CD4-positive, alpha-beta T cell (primary cell): ENCODE measurements at regions of chr6 and their contacts with region 1.

Region 1: GRCh38 chr6:90393232-90393884 is 96.7 kb upstream of the BACH2 start:
- DNase-seq: peak; percentile 54 to 86 (median 61)
- ATAC-seq: peak; percentile 73
- H3K4me3 ChIP-seq: no peak overlapping the region
- H3K4me3 Mint-ChIP-seq: no peak overlapping the region
- H3K27ac ChIP-seq: no peak overlapping the region
- H3K27ac Mint-ChIP-seq: peak overlapping the region; percentile 6
- H3K4me1 ChIP-seq: peaks cover 22% of the 10 kb centered on the region
- H3K4me1 Mint-ChIP-seq: peaks cover 34% of the 10 kb centered on the region
- H3K27me3 ChIP-seq: no peaks in the 10 kb centered on the region
- H3K27me3 Mint-ChIP-seq: no peaks in the 10 kb centered on the region
- CTCF ChIP-seq: peak; percentile 81

Region 2: GRCh38 chr6:89819336-89820130 is 573.8 kb before region 1 on chr6 and contains the start of gene MDN1:
- CTCF ChIA-PET with region 1: no interaction called
- POLR2A ChIA-PET with region 1: no interaction called
- intact Hi-C with region 1: loop called in 1 of 2 experiments (anchors 10 kb)
- DNase-seq: peak; percentile 67 to 96 (median 82)
- ATAC-seq: peak; percentile 91
- H3K4me3 ChIP-seq: peak within 1 kb of the TSS; percentile 91
- H3K4me3 Mint-ChIP-seq: peak within 1 kb of the TSS; percentile 93
- H3K27ac ChIP-seq: peak within 1 kb of the TSS; percentile 79 to 83
- H3K27ac Mint-ChIP-seq: peak within 1 kb of the TSS; percentile 86
- H3K4me1 ChIP-seq: peaks cover 24% of the 10 kb centered on the region
- H3K4me1 Mint-ChIP-seq: peaks cover 36% of the 10 kb centered on the region
- H3K27me3 ChIP-seq: no peaks in the 10 kb centered on the region
- H3K27me3 Mint-ChIP-seq: no peaks in the 10 kb centered on the region
- CTCF ChIP-seq: no peak
- total RNA-seq, gene MDN1: 40.3 to 40.4 TPM

Region 3: DNA sequence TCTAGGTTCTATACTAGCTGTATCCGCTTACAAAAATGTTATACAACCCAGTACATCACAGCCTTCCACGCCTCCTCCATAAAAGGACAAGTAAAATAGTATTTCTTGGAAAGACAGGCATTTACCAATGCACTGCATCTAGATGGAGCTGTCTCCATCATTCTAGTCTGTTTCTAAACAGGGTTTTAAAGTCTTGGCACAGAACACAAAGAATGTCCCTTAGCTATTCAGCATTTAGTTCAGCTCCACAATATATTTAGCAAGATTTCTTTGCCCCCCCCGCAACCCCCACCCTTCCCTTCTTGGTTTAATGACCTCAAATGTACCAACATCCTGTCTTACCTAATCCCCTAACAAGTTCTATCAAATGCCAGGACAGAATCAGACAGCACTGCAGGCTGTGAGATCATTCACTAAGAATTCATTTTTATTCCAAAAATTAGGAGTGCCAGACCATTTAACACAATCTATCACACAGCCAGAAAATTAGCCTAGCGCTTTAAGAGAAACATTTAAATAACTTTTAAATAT is 295.3 kb before region 1 on chr6:
- CTCF ChIA-PET with region 1: interaction called, 3 read pairs
- POLR2A ChIA-PET with region 1: no interaction called
- intact Hi-C with region 1: loop called in 1 of 2 experiments (anchors 10 kb)
- DNase-seq: peak in 5 of 14 experiments; percentile 17 to 51 (median 43)
- ATAC-seq: peak; percentile 77
- H3K4me3 ChIP-seq: no peak overlapping the region
- H3K4me3 Mint-ChIP-seq: peak overlapping the region; percentile 7
- H3K27ac ChIP-seq: no peak overlapping the region
- H3K27ac Mint-ChIP-seq: peak overlapping the region; percentile 82
- H3K4me1 ChIP-seq: peaks cover 34% of the 10 kb centered on the region
- H3K4me1 Mint-ChIP-seq: peaks cover 94% of the 10 kb centered on the region
- H3K27me3 ChIP-seq: no peaks in the 10 kb centered on the region
- H3K27me3 Mint-ChIP-seq: no peaks in the 10 kb centered on the region
- CTCF ChIP-seq: peak; percentile 3

Region 4: DNA sequence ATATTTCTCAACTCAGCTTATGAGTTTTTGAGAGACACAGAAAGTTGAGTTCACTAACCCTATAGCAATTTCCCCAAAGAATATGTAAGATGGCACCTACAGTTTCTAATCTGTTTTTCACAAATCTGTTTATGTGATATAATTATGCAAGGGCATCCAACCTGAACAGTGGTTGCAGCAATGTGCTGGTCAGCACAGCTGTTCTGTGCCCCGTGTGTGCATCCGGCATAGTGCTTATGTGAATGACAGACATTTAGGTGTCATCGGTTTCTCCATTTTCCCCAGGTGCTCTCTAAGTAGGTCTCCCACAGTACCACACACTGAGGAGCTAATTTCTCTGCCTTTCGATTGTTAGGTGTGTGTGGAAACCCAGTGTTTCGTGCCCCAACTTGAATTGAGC is 89.0 kb before region 1 on chr6:
- CTCF ChIA-PET with region 1: interaction called, 9 read pairs
- POLR2A ChIA-PET with region 1: no interaction called
- intact Hi-C with region 1: loop called in 1 of 2 experiments (anchors 5 kb)
- DNase-seq: no peak
- ATAC-seq: no peak
- H3K4me3 ChIP-seq: no peak overlapping the region
- H3K4me3 Mint-ChIP-seq: no peak overlapping the region
- H3K27ac ChIP-seq: no peak overlapping the region
- H3K27ac Mint-ChIP-seq: no peak overlapping the region
- H3K4me1 ChIP-seq: no peaks in the 10 kb centered on the region
- H3K4me1 Mint-ChIP-seq: peaks cover 22% of the 10 kb centered on the region
- H3K27me3 ChIP-seq: peaks cover 0 to under 1% of the 10 kb centered on the region in 2 experiments
- H3K27me3 Mint-ChIP-seq: no peaks in the 10 kb centered on the region
- CTCF ChIP-seq: no peak

Region 5: DNA sequence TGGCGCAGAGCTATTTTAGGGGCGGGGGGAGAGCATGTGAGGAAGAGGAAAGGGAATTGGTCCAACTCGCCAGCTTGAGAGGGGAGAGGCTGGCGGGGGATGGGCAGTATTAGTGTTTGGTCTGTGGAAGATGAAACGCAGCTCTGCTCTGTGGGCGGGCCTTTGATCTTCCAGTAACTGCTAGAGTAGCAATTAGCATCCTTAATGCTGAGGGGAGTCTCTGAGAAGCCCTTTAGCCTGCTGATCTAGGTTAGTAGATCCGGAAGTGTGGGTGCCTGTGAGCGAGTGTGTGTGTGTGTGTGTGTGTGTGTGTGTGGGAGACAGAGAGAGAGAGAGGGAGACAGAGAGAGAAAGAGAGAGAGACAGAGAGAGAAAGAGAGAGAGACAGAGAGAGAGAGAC is 20.5 kb after region 1 on chr6:
- CTCF ChIA-PET with region 1: interaction called, 21 read pairs
- POLR2A ChIA-PET with region 1: interaction called, 6 read pairs
- intact Hi-C with region 1: no loop called
- DNase-seq: peak; percentile 56 to 93 (median 66)
- ATAC-seq: peak; percentile 79
- H3K4me3 ChIP-seq: peak overlapping the region; percentile 35
- H3K4me3 Mint-ChIP-seq: peak overlapping the region; percentile 85
- H3K27ac ChIP-seq: no peak overlapping the region
- H3K27ac Mint-ChIP-seq: peak overlapping the region; percentile 90
- H3K4me1 ChIP-seq: peaks cover 42% of the 10 kb centered on the region
- H3K4me1 Mint-ChIP-seq: peaks cover 37% of the 10 kb centered on the region
- H3K27me3 ChIP-seq: no peaks in the 10 kb centered on the region
- H3K27me3 Mint-ChIP-seq: peaks cover 5% of the 10 kb centered on the region
- CTCF ChIP-seq: no peak